Aorta (tissue), 5 donors: ENCODE measurements at regions of chr2 and their contacts with region 1.

Region 1: DNA sequence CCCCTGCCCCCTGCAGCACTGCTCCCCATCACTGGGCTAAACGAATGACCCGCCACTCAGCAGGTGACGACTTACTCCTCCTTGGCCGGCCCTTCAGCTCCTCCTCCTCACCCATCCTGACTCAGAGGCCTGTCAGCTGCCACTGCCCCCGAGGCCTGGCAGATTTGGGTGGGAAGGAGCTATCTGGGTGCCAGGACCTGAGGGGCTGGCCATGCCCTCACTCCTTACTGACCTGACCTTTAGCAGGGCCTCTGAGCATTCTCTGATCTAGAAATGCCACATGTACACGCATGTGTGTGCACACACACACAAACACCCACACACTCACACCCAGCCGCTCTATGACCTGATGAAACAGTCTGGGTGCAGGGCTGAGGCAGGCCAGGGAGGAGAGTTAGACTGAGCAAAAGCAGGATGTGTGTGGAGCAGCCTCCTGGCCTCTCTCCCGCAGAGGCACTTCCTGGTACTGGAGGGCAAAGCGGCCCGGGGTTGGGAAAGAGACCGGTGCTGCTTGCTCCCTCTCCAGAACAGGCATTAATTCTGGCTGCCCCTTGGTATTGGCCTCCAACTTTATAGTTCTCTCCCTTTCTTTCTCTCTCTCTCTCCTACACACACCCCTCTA is 68.0 kb downstream of the ZFP36L2 start:
- DNase-seq: peak; percentile 87 to 90
- ATAC-seq: peak; percentile 72
- H3K4me3 ChIP-seq: no peak overlapping the region
- H3K27ac ChIP-seq: peak overlapping the region; percentile 80 to 95
- H3K4me1 ChIP-seq: peaks cover 0 to 4% of the 10 kb centered on the region in 2 donors
- H3K27me3 ChIP-seq: no peaks in the 10 kb centered on the region

Region 2: DNA sequence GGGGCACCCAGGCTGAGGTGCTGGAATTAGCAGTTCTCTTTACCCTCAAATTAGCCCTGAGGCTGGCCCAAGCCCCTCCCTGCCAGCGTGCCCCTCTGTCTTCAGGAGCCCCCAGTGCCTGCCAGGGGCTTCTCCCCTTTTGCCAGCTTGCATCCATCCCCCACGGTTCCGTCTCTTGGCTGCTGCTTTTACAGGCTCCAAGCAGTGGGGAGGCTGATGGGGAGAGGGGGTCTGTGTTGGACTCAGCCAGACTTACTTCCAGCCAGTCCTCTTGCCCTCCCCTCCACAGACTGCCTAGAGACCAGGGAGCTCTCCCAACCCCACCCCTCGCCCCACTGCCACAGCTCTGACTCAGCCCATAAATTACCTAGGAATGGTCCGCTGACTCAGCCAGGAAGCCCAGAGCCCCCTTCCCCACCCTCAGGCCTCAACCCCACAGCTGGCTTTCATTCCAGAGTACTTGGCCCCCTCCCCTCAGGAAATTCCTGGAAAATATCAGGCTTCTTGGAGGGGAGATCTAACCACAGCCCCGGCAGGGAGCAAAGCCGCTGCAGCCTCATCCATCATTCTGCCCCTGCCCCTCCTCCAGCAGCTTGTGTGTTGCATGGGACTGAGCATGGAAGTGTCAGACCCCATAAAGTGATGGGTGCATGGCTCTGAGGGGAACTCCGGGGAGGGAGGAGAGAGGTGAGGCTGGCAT is 116.6 kb before region 1 on chr2:
- intact Hi-C with region 1: loop called in 1 of 2 experiments (anchors 5 kb)
- DNase-seq: peak; percentile 86 to 90
- ATAC-seq: peak; percentile 73
- H3K4me3 ChIP-seq: no peak overlapping the region
- H3K27ac ChIP-seq: peak overlapping the region in 1 of 2 donors; percentile 29
- H3K4me1 ChIP-seq: no peaks in the 10 kb centered on the region
- H3K27me3 ChIP-seq: no peaks in the 10 kb centered on the region

Region 3: GRCh38 chr2:43075054-43075593 is 83.2 kb before region 1 on chr2:
- intact Hi-C with region 1: loop called in 1 of 2 experiments (anchors 2 kb)
- DNase-seq: peak; percentile 92
- ATAC-seq: peak; percentile 86
- H3K4me3 ChIP-seq: no peak overlapping the region
- H3K27ac ChIP-seq: peak overlapping the region; percentile 87 to 89
- H3K4me1 ChIP-seq: no peaks in the 10 kb centered on the region
- H3K27me3 ChIP-seq: no peaks in the 10 kb centered on the region

Region 4: DNA sequence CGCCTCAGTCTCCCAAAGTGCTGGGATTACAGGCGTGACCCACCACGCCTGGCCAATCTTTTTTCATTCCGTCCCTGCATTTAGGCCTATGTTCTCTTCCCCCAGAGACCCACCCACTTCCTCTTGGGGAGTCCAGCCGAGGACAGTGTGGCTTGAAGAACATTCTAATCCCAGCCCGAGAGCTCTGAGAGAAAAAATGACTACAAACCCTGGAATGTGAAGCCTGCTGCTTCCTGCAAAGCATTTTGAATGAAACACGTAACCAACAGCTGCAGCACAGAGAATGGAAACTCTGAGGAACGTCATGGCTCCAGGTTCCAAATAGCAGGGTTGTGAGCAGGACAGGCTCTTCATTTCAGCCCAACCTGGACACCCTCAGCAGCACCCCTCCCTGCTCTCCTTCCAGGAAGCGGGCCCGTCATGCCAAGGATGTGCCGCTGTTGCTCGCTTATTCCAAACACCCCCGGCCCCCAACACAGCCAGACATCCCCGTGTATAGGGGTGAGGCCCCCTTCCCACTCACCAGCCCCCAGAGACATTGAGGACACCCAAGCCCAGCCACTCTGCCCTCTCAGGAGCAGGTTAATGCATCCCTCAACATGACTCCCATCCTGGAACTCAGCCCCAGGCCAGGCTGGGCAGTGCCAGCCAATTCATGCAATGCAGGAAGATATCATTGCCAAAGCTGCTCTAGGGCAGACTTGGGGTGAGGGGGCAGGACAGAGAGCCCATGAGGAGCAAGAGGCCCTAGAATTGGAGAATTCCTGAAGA is 71.7 kb before region 1 on chr2:
- intact Hi-C with region 1: loop called in 1 of 2 experiments (anchors 2 kb)
- DNase-seq: peak; percentile 85 to 89
- ATAC-seq: peak; percentile 92
- H3K4me3 ChIP-seq: no peak overlapping the region
- H3K27ac ChIP-seq: peak overlapping the region; percentile 94 to 99
- H3K4me1 ChIP-seq: peaks cover 0 to 6% of the 10 kb centered on the region in 2 donors
- H3K27me3 ChIP-seq: no peaks in the 10 kb centered on the region